ENCODE measurements at regions of chr6 and their contacts with region 1.

Region 1: DNA sequence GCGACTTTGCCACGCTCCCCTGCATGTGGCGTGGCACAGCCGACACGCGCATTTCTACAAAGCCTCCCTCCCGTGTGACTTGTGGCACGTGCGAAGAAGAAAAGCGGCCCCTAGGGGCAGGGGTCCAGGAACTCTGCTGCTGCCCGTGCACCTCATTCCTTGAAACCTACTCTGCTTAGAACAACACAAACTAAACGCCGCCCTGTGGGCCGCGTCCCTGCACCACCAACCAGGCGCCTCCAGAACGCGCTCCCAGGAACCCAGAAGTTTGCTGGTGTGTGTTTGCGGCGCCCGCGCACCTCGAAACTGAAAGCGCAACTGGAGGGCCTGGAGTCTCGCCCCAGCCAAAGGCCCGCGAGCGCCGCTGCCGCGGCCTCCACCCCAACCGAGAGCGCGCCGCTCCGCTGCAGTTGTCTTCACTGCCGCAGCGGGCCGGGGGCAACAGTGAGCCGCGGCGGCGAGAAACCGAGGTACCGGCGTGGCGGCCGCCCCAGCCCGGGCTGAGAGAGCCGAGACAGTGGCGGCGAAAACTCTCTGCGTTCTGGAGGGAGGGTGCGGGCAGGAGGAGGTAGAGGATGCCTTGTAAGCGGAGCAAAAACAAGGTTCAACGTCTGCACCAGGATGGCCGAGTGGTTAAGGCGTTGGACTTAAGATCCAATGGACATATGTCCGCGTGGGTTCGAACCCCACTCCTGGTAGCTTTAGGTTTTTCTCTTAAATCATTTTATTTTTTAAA is 65.8 kb downstream of the STX11 start:
- DNase-seq: peak; percentile 93
- ATAC-seq: peak; percentile 93

Region 2: DNA sequence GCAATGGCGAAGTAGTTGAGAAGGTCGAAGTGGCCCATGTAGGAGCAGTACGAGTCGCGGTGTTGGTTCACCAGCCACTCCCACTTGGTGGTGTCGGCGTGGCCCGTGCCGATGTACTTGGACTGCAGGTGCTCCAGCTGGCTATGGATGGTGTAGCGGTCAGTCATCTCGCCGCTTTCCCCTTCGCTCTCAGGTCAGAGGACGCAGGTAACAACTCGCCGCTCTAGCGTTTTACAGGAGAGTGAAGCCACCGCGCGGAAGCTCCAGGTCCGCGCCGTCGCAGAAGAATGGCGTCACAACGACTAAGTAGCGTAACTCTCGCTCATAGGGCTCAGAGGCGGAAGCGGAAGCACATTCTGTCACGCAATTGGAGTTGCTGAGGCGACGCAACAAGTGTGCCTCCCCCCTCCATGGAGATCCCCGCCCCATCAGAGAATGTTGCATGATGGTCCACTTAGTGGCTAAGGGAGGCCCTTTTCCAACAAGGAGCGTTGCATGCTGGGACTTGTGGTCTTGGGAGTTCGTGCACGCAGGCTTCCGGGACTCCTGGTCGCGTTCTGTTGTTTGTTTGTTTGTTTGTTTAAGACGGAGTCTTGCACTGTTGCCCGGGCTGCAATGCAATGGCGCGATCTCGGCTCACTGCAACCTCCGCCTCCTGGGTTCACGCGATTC is 120.6 kb before region 1 on chr6 and contains the start of gene SF3B5:
- intact Hi-C with region 1: loop called in 1 of 2 experiments (anchors 2 kb)
- DNase-seq: peak; percentile 100
- ATAC-seq: peak; percentile 98
- total RNA-seq, gene SF3B5: 133 to 167 TPM

Region 3: GRCh38 chr6:144104898-144105487 is 111.1 kb before region 1 on chr6:
- intact Hi-C with region 1: loop called (anchors 2 to 5 kb)
- DNase-seq: no peak
- ATAC-seq: peak; percentile 69

Region 4: GRCh38 chr6:144482142-144482541 is 266.0 kb after region 1 on chr6:
- intact Hi-C with region 1: loop called in 1 of 2 experiments (anchors 10 kb)
- DNase-seq: peak; percentile 68 to 89
- ATAC-seq: peak; percentile 85

Measured in left colon (tissue), 2 donors.